ENCODE measurements at regions of chr6 and their contacts with region 1.

Region 1: GRCh38 chr6:24991810-24992467 is 56.2 kb upstream of the RIPOR2 start:
- DNase-seq: no peak
- H3K4me3 ChIP-seq: no peak overlapping the region
- H3K27ac ChIP-seq: no peak overlapping the region
- H3K4me1 ChIP-seq: no peaks in the 10 kb centered on the region
- H3K27me3 ChIP-seq: no peaks in the 10 kb centered on the region
- CTCF ChIP-seq: peak; percentile 82

Region 2: GRCh38 chr6:25070547-25071366 is 78.8 kb after region 1 on chr6:
- intact Hi-C with region 1: loop called (anchors 5 kb)
- DNase-seq: peak; percentile 58
- H3K4me3 ChIP-seq: no peak overlapping the region
- H3K27ac ChIP-seq: peak overlapping the region; percentile 35
- H3K4me1 ChIP-seq: no peaks in the 10 kb centered on the region
- H3K27me3 ChIP-seq: no peaks in the 10 kb centered on the region
- CTCF ChIP-seq: peak; percentile 96

Region 3: DNA sequence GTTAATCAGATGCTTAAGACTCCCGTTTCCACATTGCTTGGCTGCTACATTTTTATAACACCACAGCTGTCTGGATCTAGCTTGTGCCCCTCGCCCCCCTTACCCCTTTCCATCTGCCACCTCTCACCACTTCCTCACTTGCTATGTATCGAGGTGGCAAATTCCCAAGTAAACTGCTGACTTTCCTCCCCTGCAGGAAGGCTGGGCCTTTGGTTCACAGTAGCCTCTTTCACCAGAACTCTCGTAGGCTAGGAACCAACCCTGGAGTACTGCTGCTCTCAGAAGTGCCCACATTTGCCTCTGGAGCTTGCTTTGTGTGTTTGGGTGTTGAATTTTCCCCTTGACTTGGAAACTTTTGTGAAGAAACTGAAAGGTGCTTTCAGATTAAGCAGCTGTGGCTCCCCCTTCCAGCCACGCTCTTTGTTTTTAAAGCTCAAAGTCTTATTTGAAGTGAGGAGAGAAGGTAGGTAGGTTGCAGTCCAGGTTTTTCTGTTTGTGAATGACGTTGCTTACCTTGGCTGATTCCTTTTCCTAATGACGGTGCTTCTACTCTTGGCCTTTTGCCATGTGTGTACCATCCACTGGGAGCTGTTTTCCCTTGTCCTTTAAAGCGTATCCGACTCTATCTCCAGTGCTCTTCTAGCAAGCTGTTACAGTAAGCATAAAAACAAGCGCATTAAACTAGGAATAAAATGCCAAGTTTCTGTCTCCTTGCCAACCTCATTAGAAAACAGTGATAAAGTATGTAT is 377.7 kb after region 1 on chr6:
- intact Hi-C with region 1: no loop called
- DNase-seq: no peak
- H3K4me3 ChIP-seq: no peak overlapping the region
- H3K27ac ChIP-seq: peak overlapping the region; percentile 54
- H3K4me1 ChIP-seq: peaks cover 35% of the 10 kb centered on the region
- H3K27me3 ChIP-seq: no peaks in the 10 kb centered on the region
- CTCF ChIP-seq: no peak

Measured in left ventricle myocardium inferior (tissue), 1 donor.